Aorta (tissue), 5 donors: ENCODE measurements at regions of chr12 and their contacts with region 1.

Region 1: DNA sequence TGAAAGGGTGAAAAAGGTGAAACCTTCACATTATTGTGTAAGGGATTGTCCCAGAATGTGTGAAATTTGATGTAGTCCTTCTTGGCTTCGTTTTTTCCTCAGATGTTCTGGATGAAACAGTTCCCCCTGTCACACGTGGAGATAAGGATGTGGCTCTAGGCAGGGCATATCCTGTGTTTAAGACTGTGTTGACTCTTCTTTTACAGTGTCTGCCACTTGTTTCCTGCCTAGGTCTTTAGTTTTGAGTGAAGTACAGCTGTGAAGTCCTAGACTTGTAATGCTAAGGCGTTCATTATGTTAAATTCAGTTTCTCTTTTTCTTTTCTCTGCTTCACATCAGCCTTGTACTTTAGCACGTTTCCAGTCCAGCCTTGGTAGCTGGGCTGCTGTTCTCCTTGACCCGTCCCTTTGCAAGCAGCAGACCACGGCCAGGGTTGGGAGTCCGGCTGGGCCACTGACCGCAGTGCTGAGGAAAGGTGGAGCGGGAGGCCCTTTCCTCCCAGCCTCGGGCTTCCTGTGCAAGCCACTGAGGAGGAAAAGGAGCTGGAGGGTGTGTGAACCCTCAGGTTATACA is 59.1 kb downstream of the RASSF3 start:
- DNase-seq: peak; percentile 68 to 85
- ATAC-seq: no peak
- H3K4me3 ChIP-seq: no peak overlapping the region
- H3K27ac ChIP-seq: peak overlapping the region; percentile 38 to 96
- H3K4me1 ChIP-seq: peaks cover 16 to 18% of the 10 kb centered on the region in 2 donors
- H3K27me3 ChIP-seq: no peaks in the 10 kb centered on the region

Region 2: GRCh38 chr12:64633656-64634337 is 35.6 kb before region 1 on chr12:
- intact Hi-C with region 1: loop called in 1 of 2 experiments (anchors 5 kb)
- DNase-seq: peak; percentile 81 to 87
- ATAC-seq: peak; percentile 65
- H3K4me3 ChIP-seq: no peak overlapping the region
- H3K27ac ChIP-seq: peak overlapping the region; percentile 68 to 84
- H3K4me1 ChIP-seq: peaks cover 11 to 14% of the 10 kb centered on the region in 2 donors
- H3K27me3 ChIP-seq: no peaks in the 10 kb centered on the region

Region 3: GRCh38 chr12:64733857-64734256 is 64.5 kb after region 1 on chr12:
- intact Hi-C with region 1: no loop called
- DNase-seq: peak; percentile 72 to 83
- ATAC-seq: peak; percentile 52
- H3K4me3 ChIP-seq: no peak overlapping the region
- H3K27ac ChIP-seq: no peak overlapping the region
- H3K4me1 ChIP-seq: peaks cover 0 to 5% of the 10 kb centered on the region in 2 donors
- H3K27me3 ChIP-seq: no peaks in the 10 kb centered on the region